Naive thymus-derived CD4-positive, alpha-beta T cell (primary cell): ENCODE measurements at regions of chr19 and their contacts with region 1.

Region 1: GRCh38 chr19:41883821-41884733 is 1.1 kb downstream of the ARHGEF1 start:
- DNase-seq: peak; percentile 69 to 91 (median 79)
- ATAC-seq: peak; percentile 82
- H3K4me3 ChIP-seq: peak overlapping the region; percentile 99
- H3K4me3 Mint-ChIP-seq: peak overlapping the region; percentile 92 to 100 (median 98)
- H3K27ac ChIP-seq: peak overlapping the region; percentile 84
- H3K27ac Mint-ChIP-seq: peak overlapping the region; percentile 93 to 99 (median 98)
- H3K4me1 ChIP-seq: peaks cover 34 to 44% of the 10 kb centered on the region in 2 donors
- H3K4me1 Mint-ChIP-seq: peaks cover 41 to 58% (median 51%) of the 10 kb centered on the region in 7 donors
- H3K27me3 ChIP-seq: no peaks in the 10 kb centered on the region
- H3K27me3 Mint-ChIP-seq: no peaks in the 10 kb centered on the region

Region 2: GRCh38 chr19:41859618-41860418 is 24.3 kb before region 1 on chr19 and contains the start of gene RPS19:
- CTCF ChIA-PET with region 1: interaction called, 29 read pairs
- POLR2A ChIA-PET with region 1: interaction called, 220 read pairs
- intact Hi-C with region 1: loop called (anchors 1 kb)
- DNase-seq: peak; percentile 95 to 99 (median 98)
- ATAC-seq: peak; percentile 92
- H3K4me3 ChIP-seq: peak within 1 kb of the TSS; percentile 90
- H3K4me3 Mint-ChIP-seq: peak within 1 kb of the TSS; percentile 86 to 95 (median 93)
- H3K27ac ChIP-seq: peak within 1 kb of the TSS; percentile 89
- H3K27ac Mint-ChIP-seq: peak within 1 kb of the TSS; percentile 91 to 98 (median 95)
- H3K4me1 ChIP-seq: peaks cover 39 to 43% of the 10 kb centered on the region in 2 donors
- H3K4me1 Mint-ChIP-seq: peaks cover 34 to 47% (median 41%) of the 10 kb centered on the region in 7 donors
- H3K27me3 ChIP-seq: no peaks in the 10 kb centered on the region
- H3K27me3 Mint-ChIP-seq: peaks cover 0 to 9% (median 0%) of the 10 kb centered on the region in 5 donors
- total RNA-seq, gene RPS19: 2,739 to 3,712 (median 3,396) TPM

Region 3: DNA sequence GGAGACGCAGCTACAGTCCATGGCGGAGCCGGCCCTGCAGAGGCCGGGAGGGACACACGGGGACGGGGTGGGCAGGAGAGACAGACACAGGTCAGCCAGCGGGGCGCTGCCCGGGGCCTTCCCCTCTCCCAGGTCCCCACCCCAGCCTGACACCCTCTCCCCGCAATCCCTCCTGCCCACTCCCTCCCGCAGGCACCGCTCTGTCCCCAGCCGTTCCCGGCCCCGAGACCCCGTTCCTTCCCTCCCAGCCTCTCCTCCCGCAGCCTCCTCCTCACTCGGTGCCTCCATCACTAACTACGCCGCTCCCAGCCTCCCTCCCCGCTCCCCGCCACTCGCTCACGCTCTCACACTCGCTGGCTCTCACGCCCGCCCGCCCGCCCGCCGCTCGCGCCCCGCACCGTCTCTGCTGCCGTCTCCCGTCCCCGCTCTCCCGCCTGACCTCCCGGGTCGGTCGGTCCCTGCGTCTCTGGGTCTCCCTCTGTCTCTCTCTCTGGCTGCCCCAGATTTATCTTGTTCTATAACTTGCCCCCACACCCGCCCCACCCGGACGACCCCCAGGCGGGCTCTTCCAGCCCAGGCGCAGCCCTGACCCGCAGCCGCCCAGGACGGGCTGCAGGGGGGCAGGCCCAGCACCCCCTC is 28.9 kb after region 1 on chr19:
- CTCF ChIA-PET with region 1: interaction called, 3 read pairs
- POLR2A ChIA-PET with region 1: interaction called, 348 read pairs
- intact Hi-C with region 1: loop called in 1 of 2 experiments (anchors 1 kb)
- DNase-seq: peak in 3 of 9 donors; percentile 39 to 46 (median 45)
- ATAC-seq: peak; percentile 32
- H3K4me3 ChIP-seq: no peak overlapping the region
- H3K4me3 Mint-ChIP-seq: peak overlapping the region in 6 of 10 donors; percentile 37 to 71 (median 51)
- H3K27ac ChIP-seq: no peak overlapping the region
- H3K27ac Mint-ChIP-seq: peak overlapping the region in 4 of 9 donors; percentile 35 to 87 (median 78)
- H3K4me1 ChIP-seq: peaks cover 20 to 53% of the 10 kb centered on the region in 2 donors
- H3K4me1 Mint-ChIP-seq: peaks cover 15 to 43% (median 31%) of the 10 kb centered on the region in 7 donors
- H3K27me3 ChIP-seq: peaks cover 0 to 23% of the 10 kb centered on the region in 2 donors
- H3K27me3 Mint-ChIP-seq: peaks cover 0 to 28% (median 0%) of the 10 kb centered on the region in 5 donors

Region 4: DNA sequence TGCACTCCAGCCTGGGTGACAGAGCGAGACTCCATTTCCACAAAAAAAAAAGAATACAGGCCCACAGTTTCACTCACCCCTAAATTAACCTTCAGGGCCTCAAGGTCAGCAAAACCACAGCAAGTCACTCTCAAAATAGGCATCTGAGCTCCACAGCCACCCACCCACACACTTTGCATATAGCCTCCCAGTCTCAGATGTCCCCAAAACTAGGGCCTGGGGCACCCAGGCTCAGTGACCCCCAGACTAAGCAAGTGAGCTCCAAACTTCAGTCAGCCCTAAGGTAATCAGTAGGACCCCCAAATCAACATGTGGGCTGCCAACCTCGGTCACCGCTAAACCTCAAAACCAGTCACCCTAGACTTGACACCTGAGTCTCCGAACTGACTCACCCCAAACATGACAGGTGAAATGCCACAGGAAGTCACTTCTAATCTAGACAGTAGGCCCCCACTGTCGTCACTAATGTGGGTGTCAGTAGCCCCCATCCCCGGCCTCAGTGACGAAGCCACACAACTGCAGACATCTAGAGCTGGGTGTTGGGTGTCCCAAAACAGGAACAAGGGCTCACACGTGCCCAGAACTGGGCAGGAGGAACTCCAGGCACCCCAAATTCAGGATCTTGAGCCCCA is 61.2 kb after region 1 on chr19:
- CTCF ChIA-PET with region 1: no interaction called
- POLR2A ChIA-PET with region 1: interaction called, 106 read pairs
- intact Hi-C with region 1: loop called in 1 of 2 experiments (anchors 1 kb)
- DNase-seq: peak; percentile 45 to 90 (median 82)
- ATAC-seq: peak; percentile 96
- H3K4me3 ChIP-seq: no peak overlapping the region
- H3K4me3 Mint-ChIP-seq: peak overlapping the region in 9 of 10 donors; percentile 39 to 77 (median 60)
- H3K27ac ChIP-seq: peak overlapping the region; percentile 57
- H3K27ac Mint-ChIP-seq: peak overlapping the region; percentile 84 to 100 (median 96)
- H3K4me1 ChIP-seq: peaks cover 23 to 41% of the 10 kb centered on the region in 2 donors
- H3K4me1 Mint-ChIP-seq: peaks cover 27 to 50% (median 41%) of the 10 kb centered on the region in 7 donors
- H3K27me3 ChIP-seq: no peaks in the 10 kb centered on the region
- H3K27me3 Mint-ChIP-seq: peaks cover 0 to 16% (median 4%) of the 10 kb centered on the region in 5 donors

Region 5: GRCh38 chr19:42075616-42076379 is 191.7 kb after region 1 on chr19 and contains the start of gene ZNF574:
- CTCF ChIA-PET with region 1: no interaction called
- POLR2A ChIA-PET with region 1: no interaction called
- intact Hi-C with region 1: loop called (anchors 10 kb)
- DNase-seq: peak; percentile 91 to 99 (median 98)
- ATAC-seq: peak; percentile 98
- H3K4me3 ChIP-seq: peak within 1 kb of the TSS; percentile 70
- H3K4me3 Mint-ChIP-seq: peak within 1 kb of the TSS; percentile 92 to 100 (median 98)
- H3K27ac ChIP-seq: peak within 1 kb of the TSS; percentile 97
- H3K27ac Mint-ChIP-seq: peak within 1 kb of the TSS; percentile 99 to 100 (median 100)
- H3K4me1 ChIP-seq: peaks cover 19 to 24% of the 10 kb centered on the region in 2 donors
- H3K4me1 Mint-ChIP-seq: peaks cover 26 to 44% (median 38%) of the 10 kb centered on the region in 7 donors
- H3K27me3 ChIP-seq: no peaks in the 10 kb centered on the region
- H3K27me3 Mint-ChIP-seq: peaks cover 0 to 13% (median 0%) of the 10 kb centered on the region in 5 donors
- total RNA-seq, gene ZNF574: 17.6 to 26.7 (median 20.9) TPM